ENCODE measurements at regions of chr2 and their contacts with region 1.

Region 1: DNA sequence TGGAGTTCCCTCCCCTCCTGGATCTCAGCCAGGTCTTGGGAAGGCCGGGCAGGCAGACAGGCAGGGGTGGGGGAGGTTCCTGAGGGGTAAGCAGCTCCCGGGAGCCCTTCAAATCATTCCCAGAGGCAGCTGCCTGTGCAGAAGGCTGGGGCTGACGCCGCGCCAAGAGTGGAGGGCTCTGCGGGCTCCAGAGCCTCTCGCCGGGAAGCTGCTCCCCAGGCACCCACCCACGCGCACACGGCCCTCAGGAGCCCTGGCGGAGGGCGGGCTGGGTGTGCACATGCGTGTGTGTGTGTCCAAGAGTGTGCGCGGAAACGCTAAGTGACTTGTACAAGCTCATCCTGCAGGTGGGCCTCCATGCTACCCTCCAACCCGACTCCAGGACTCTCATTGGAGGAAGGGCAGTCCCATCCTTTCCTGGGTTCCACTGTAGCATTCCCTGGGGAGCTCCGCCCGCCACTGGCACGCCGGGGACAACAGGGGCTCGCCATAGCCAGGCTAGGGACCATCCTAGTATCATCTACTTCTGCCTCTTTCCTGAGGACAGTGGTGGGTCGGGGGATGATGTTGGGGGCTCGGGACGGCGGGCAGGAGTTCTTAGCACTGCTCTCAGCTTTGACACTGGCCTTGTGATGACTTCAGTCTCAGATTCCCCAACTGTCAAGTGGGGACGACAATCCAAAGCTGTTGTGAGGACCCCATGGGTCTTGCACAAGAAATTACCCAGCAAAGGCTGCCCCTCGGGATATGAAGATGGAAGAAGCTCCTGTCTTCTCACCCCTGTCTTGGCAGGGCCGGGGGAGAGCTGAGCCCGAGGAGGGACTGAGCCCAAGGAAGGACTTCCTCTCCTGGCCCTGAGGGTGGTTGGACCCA is 50.3 kb downstream of the INHBB start:
- DNase-seq: peak; percentile 22 to 50 (median 30)
- ATAC-seq: no peak
- H3K4me3 ChIP-seq: no peak overlapping the region
- H3K27ac ChIP-seq: no peak overlapping the region
- H3K4me1 ChIP-seq: no peaks in the 10 kb centered on the region
- H3K27me3 ChIP-seq: no peaks in the 10 kb centered on the region
- CTCF ChIP-seq: no peak
- POLR2A ChIP-seq: no peak

Region 2: GRCh38 chr2:120983344-120983743 is 587.1 kb after region 1 on chr2:
- intact Hi-C with region 1: loop called (anchors 5 kb)
- DNase-seq: no peak
- ATAC-seq: no peak
- H3K4me3 ChIP-seq: no peak overlapping the region
- H3K27ac ChIP-seq: no peak overlapping the region
- H3K4me1 ChIP-seq: no peaks in the 10 kb centered on the region
- H3K27me3 ChIP-seq: no peaks in the 10 kb centered on the region
- CTCF ChIP-seq: no peak
- POLR2A ChIP-seq: no peak

Measured in body of pancreas (tissue), 4 donors.